Motor neuron (in vitro differentiated cells): ENCODE measurements at regions of chr1 and their contacts with region 1.

Region 1: DNA sequence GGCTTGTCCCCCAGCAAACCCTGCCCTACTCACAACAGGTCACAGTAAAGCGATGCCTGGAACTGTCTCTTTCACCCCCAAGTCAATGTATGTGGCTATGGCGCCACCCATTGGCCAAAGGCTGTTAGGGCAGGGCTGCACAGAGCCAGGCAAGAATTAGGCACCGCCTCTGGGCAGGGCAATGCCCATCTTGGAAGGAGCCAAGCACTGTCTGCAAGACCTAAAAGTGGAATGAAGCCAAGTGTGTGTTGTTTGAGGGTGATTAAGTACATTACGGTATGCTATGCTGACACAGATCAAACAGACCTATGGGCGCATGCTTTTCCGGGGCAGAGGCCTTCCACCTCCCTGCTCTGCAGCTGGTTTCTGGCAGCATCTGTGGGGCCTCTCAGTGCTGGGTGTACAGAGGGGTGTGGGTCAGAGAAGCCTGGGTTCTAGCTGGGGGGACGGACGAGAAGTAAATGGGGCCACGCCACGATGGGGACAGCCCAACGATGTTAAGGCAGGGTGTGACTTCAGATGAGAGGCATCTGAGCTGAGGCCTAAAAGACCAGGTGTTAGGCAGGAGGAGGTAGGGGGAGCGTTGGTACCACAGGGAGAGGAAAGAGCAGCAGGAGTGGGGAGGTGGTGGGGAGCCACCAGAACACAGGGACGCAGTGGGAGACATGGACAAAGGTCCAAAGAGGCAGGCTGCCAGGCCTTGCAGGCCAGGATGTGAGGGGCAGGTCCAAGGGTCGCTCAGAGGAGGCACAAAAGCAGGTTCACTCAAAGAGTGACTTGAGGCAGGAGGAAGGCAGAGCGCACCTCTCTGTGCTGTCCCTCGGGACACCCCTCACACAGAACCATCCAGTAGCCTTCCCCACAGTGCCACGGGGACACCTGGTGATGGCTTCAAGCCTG is 49.8 kb downstream of the ACOT7 start:
- ATAC-seq: peak; percentile 36 to 96 (median 60)
- H3K4me3 ChIP-seq: no peak overlapping the region
- H3K27ac ChIP-seq: no peak overlapping the region
- H3K4me1 ChIP-seq: peaks cover 36 to 44% of the 10 kb centered on the region in 2 donors

Region 2: GRCh38 chr1:6052543-6053205 is 291.1 kb before region 1 on chr1:
- in situ Hi-C with region 1: loop called in 1 of 9 experiments (anchors 25 kb)
- ATAC-seq: peak; percentile 72 to 89 (median 80)
- H3K4me3 ChIP-seq: no peak overlapping the region
- H3K27ac ChIP-seq: no peak overlapping the region
- H3K4me1 ChIP-seq: peaks cover 22% of the 10 kb centered on the region in 2 donors

Region 3: DNA sequence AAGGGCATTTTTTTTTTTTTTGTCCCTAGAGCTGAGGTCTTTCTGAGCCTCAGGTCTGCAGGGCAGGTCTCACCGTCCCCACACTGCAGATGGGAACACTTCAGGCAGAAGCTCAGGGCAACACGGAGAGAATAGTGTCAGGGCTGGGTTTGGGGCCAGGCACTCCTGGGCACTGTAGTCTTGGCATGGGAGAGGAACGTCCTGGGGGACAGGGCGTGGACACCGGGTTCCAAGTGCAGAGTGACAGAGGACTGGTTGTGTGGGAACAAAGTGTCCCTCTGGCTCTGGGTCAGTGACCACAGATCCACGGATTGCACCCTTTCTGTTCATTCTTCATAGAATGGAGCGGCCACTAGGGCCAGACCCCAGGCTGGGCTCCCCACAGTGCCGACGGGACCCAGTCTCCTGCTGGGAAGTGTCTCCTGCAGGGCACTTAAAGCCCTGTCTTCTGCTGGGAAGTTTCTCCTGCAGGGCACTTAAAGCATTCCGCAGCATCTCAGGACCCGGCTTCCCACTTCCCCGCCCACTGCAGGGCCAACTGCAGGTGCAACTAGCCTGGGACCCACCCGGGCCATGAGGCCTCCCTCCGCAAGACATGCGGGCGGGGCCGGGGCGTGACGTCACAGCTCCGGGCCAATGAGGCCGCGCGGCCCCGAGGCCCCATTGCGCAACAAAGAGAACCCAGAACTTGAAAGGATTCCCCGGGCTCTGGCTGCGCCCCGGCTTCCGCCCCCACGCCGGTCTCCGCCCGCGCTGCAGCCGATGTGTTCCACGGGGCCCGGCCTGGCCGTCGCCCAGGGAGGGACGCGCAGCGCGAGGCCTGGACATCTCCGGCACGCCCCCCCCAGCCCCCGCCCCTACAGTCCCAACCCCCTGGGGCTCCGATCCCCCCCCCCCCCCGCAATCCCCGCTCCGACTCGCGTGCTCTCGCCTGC is 84.0 kb before region 1 on chr1:
- in situ Hi-C with region 1: loop called in 1 of 9 experiments (anchors 10 kb)
- ATAC-seq: peak; percentile 34 to 76 (median 53)
- H3K4me3 ChIP-seq: peak overlapping the region; percentile 57 to 88 (median 66)
- H3K27ac ChIP-seq: no peak overlapping the region
- H3K4me1 ChIP-seq: peaks cover 25 to 30% of the 10 kb centered on the region in 2 donors